ENCODE measurements at regions of chr14 and their contacts with region 1.

Region 1: DNA sequence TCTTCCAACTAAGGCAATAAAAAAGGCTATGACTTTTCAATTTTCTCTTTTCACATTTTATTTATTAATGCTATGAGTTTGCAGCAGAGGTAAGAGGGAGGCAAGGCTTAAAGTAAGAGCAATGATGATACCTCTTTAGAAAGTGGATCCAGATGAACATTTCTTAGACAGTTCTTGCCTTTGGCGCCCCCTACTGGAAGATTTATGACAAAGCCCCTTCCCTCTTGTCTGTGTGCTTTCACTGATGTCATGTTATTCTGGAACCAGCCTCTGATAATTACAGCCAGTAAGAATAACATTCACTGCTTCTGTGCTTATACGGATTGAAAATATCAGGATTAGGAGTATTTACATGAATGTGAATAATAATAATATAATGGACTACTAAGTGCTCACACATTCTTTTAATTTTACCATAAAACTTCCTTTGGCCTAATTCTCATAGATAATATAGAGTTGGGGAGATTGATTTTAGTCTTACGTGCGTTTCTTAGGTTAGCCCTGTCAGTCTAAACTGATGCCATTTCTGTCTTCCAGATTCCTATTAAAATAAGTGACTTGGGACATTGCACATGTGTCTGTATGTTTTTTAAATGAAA is 1929.9 kb upstream of the SEL1L start:
- DNase-seq: peak in 2 of 5 donors; percentile 13 to 19
- ATAC-seq: no peak
- H3K4me3 ChIP-seq: no peak overlapping the region
- H3K27ac ChIP-seq: no peak overlapping the region
- H3K4me1 ChIP-seq: no peaks in the 10 kb centered on the region
- H3K27me3 ChIP-seq: no peaks in the 10 kb centered on the region
- CTCF ChIP-seq: peak; percentile 44 to 76 (median 64)
- POLR2A ChIP-seq: no peak

Region 2: DNA sequence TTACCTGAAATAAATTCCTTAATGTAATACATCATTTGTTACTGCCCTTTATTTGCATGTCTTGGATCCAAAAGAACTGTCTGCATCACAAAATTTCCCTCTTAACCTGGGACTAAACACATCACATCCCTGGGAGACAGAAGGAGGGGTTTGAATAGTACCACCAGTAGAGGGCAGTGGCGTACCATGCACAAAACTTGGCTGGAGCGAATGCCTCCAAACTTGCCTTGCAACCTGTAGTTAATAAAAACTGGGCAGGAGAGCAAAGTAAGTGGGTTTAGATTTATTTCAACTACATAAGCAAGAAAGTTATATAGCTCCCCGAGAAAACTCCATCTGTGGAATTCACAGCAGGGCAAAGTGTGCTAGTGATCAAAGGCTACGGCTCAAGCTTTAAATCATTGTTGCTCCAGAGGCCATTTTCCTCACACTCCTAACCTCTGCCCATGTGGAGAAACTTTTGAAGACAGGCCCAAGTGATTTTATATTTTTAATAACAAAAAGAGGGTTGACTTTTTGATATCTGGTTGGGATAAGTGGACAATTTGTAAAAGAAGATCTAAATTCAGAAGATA is 753.2 kb before region 1 on chr14:
- intact Hi-C with region 1: loop called in 1 of 10 experiments (anchors 5 kb)
- DNase-seq: peak in 3 of 5 donors; percentile 25 to 43 (median 32)
- ATAC-seq: no peak
- H3K4me3 ChIP-seq: no peak overlapping the region
- H3K27ac ChIP-seq: no peak overlapping the region
- H3K4me1 ChIP-seq: peaks cover 0 to 7% (median 0%) of the 10 kb centered on the region in 12 donors
- H3K27me3 ChIP-seq: no peaks in the 10 kb centered on the region
- CTCF ChIP-seq: peak; percentile 48 to 79 (median 68)
- POLR2A ChIP-seq: no peak

Region 3: DNA sequence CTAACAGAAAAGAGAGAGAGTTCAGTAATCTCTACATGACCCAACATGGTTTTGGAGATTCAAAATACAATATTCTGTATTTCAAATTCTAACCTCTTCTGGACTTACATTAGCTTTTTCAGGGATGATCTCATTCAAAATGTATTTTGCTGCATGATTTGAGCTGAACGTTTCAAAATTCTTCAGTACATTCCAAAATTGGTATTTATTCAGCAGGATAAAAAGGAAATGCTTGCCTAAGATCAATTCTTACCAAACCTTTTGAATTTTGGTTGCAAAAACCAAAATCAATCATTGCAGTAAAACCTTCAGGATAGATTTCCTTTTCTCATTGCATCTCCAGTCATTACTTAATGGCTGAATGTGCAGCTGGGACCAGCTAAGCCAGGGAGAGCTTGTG is 168.7 kb before region 1 on chr14:
- intact Hi-C with region 1: loop called in 4 of 10 experiments (anchors 5 to 10 kb)
- DNase-seq: no peak
- ATAC-seq: no peak
- H3K4me3 ChIP-seq: no peak overlapping the region
- H3K27ac ChIP-seq: no peak overlapping the region
- H3K4me1 ChIP-seq: no peaks in the 10 kb centered on the region
- H3K27me3 ChIP-seq: no peaks in the 10 kb centered on the region
- CTCF ChIP-seq: no peak
- POLR2A ChIP-seq: no peak

Region 4: DNA sequence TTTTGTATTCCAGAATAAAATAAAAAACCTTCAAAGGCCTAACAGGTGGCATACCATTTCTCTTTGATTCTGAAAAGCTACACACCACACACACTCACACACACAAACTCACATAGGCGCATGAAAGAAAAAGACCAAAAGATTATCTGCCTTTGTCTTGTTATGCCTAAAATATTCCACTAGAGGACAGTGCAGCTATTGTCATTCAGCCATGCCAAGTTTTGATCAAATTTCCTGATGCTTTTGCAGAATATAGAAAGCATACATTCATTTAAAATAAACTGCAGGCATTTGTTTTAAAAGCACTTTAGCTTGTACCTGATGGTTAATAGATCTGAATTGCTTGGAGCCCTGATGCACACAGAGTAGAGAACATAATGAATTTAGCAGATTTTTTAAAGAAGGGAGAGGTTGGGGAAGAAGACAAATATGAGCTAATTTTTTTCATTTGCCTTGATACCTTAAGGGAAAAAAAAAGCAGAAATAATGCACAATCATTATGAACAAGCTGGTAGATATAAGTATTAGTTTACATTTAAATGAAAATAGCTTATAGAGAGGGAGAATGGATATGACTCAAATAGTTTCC is 163.0 kb before region 1 on chr14:
- intact Hi-C with region 1: loop called in 4 of 10 experiments (anchors 5 to 10 kb)
- DNase-seq: no peak
- ATAC-seq: no peak
- H3K4me3 ChIP-seq: no peak overlapping the region
- H3K27ac ChIP-seq: no peak overlapping the region
- H3K4me1 ChIP-seq: no peaks in the 10 kb centered on the region
- H3K27me3 ChIP-seq: no peaks in the 10 kb centered on the region
- CTCF ChIP-seq: peak; percentile 63 to 86 (median 77)
- POLR2A ChIP-seq: no peak

Region 5: DNA sequence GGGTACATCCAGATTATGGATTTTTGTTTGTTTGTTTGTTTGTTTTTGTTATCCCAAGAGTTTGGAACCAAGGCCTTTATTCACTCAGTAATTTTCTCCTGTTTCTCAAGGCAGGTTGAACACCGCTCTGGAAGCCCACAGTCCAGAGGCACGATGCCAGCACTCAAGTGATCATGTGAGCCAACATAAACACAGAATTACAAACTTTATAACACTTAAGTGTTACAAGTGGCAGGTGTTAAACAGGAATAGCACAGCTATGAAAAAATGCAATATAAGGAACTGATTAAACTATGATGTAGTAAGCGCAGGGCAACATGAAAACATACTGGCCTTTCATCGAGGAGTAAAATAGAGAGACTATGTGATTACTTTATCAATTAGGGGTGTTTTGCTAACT is 44.2 kb before region 1 on chr14:
- intact Hi-C with region 1: no loop called
- DNase-seq: no peak
- ATAC-seq: no peak
- H3K4me3 ChIP-seq: no peak overlapping the region
- H3K27ac ChIP-seq: no peak overlapping the region
- H3K4me1 ChIP-seq: no peaks in the 10 kb centered on the region
- H3K27me3 ChIP-seq: no peaks in the 10 kb centered on the region
- CTCF ChIP-seq: no peak
- POLR2A ChIP-seq: no peak

Region 6: GRCh38 chr14:83520837-83521236 is 57.2 kb after region 1 on chr14:
- intact Hi-C with region 1: no loop called
- DNase-seq: no peak
- ATAC-seq: no peak
- H3K4me3 ChIP-seq: no peak overlapping the region
- H3K27ac ChIP-seq: no peak overlapping the region
- H3K4me1 ChIP-seq: no peaks in the 10 kb centered on the region
- H3K27me3 ChIP-seq: no peaks in the 10 kb centered on the region
- CTCF ChIP-seq: no peak
- POLR2A ChIP-seq: no peak